ENCODE measurements at regions of chr3 and their contacts with region 1.

Region 1: GRCh38 chr3:59857589-59858346 is 807.9 kb upstream of the CFAP20DC start:
- DNase-seq: peak; percentile 78 to 80
- ATAC-seq: peak in 7 of 8 donors; percentile 89 to 97 (median 94)
- H3K4me3 ChIP-seq: peak overlapping the region in 1 of 10 donors; percentile 24
- H3K27ac ChIP-seq: no peak overlapping the region
- H3K4me1 ChIP-seq: peaks cover 0 to 7% (median 0%) of the 10 kb centered on the region in 9 donors
- H3K27me3 ChIP-seq: no peaks in the 10 kb centered on the region
- CTCF ChIP-seq: peak; percentile 77 to 96 (median 90)

Region 2: GRCh38 chr3:58994746-58995330 is 862.9 kb before region 1 on chr3:
- intact Hi-C with region 1: loop called in 3 of 10 experiments (anchors 5 to 10 kb)
- DNase-seq: peak in 1 of 2 donors; percentile 42
- ATAC-seq: no peak
- H3K4me3 ChIP-seq: no peak overlapping the region
- H3K27ac ChIP-seq: no peak overlapping the region
- H3K4me1 ChIP-seq: no peaks in the 10 kb centered on the region
- H3K27me3 ChIP-seq: no peaks in the 10 kb centered on the region
- CTCF ChIP-seq: peak in 8 of 9 donors; percentile 29 to 72 (median 64)

Region 3: DNA sequence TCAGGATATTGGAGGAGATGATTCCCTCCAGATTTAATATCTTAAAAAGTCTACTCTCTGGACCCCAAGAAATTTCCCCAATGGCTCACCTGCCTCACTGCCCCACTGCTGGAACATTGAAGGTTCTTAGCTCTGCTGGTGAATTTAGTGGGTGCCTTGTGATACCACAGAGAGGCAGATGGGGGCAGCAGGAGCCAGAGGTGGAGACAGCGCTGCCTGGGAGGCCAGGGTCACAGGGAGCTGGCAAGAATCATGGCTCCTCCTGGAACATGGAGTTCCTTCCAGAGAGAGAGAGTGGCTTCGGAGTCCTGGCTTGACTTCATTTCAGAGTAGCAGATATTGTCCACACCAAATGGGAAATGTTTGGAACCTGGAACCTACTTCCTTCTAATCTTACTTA is 544.4 kb before region 1 on chr3:
- intact Hi-C with region 1: loop called in 4 of 10 experiments (anchors 5 to 10 kb)
- DNase-seq: peak; percentile 35 to 61
- ATAC-seq: peak; percentile 47 to 97 (median 82)
- H3K4me3 ChIP-seq: no peak overlapping the region
- H3K27ac ChIP-seq: no peak overlapping the region
- H3K4me1 ChIP-seq: no peaks in the 10 kb centered on the region
- H3K27me3 ChIP-seq: no peaks in the 10 kb centered on the region
- CTCF ChIP-seq: peak; percentile 12 to 58 (median 51)

Region 4: DNA sequence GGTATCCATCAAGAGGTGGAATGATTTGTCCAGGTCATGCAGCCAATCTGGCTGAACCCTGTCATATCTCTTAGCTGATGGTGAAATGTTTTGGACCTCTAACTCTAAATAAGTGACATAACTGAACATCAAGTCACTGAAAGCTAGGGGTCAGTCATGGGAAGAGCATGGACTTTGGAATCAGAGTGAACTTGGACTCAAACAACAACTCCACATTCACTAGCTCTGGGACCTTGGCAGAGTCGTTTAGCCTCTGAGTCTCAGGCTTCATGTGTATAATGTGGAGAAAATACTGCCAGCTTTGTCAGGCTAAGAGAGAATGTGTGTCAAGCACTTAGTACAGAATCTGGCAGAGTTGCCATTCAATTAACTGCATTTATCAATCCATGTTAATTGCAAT is 250.1 kb before region 1 on chr3:
- intact Hi-C with region 1: loop called in 2 of 10 experiments (anchors 1 to 10 kb)
- DNase-seq: no peak
- ATAC-seq: peak in 6 of 8 donors; percentile 13 to 60 (median 38)
- H3K4me3 ChIP-seq: no peak overlapping the region
- H3K27ac ChIP-seq: peak overlapping the region in 3 of 10 donors; percentile 24 to 77 (median 49)
- H3K4me1 ChIP-seq: peaks cover 0 to 23% (median 11%) of the 10 kb centered on the region in 9 donors
- H3K27me3 ChIP-seq: no peaks in the 10 kb centered on the region
- CTCF ChIP-seq: peak in 6 of 9 donors; percentile 10 to 39 (median 27)

Region 5: DNA sequence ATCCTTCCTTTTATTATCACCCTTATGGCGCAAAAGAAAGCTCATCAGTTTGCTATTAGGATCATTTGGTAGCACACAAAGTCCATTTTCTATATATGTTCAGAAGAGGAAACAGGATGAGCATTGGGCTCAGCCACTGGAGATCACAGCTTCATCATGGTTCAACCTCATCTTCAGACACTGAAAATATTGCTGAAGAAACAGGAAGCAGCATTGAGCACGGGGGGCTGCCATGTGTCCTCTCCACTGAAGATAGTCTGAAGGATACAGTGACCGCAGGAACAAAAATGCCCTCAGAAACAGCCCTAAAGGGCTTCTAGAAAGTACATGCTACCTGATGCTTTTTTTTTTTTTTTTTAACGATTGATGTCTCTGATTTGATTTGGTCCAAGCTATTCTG is 27.3 kb after region 1 on chr3:
- intact Hi-C with region 1: no loop called
- DNase-seq: no peak
- ATAC-seq: peak in 3 of 8 donors; percentile 39 to 71 (median 46)
- H3K4me3 ChIP-seq: no peak overlapping the region
- H3K27ac ChIP-seq: no peak overlapping the region
- H3K4me1 ChIP-seq: no peaks in the 10 kb centered on the region
- H3K27me3 ChIP-seq: no peaks in the 10 kb centered on the region
- CTCF ChIP-seq: no peak